ENCODE measurements at regions of chr11 and their contacts with region 1.

Region 1: GRCh38 chr11:65859200-65859811 is 927 bp upstream of the MUS81 start:
- DNase-seq: peak; percentile 100
- ATAC-seq: peak; percentile 72
- H3K4me3 Mint-ChIP-seq: peak overlapping the region; percentile 89
- H3K27ac Mint-ChIP-seq: peak overlapping the region; percentile 97
- H3K4me1 Mint-ChIP-seq: peaks cover 58% of the 10 kb centered on the region
- H3K27me3 Mint-ChIP-seq: no peaks in the 10 kb centered on the region

Region 2: GRCh38 chr11:65711785-65712632 is 147.3 kb before region 1 on chr11 and contains the start of gene KAT5:
- CTCF ChIA-PET with region 1: interaction called, 18 read pairs
- POLR2A ChIA-PET with region 1: interaction called, 10 read pairs
- DNase-seq: peak; percentile 99
- ATAC-seq: peak; percentile 86
- H3K4me3 Mint-ChIP-seq: peak within 1 kb of the TSS; percentile 85
- H3K27ac Mint-ChIP-seq: peak within 1 kb of the TSS; percentile 99
- H3K4me1 Mint-ChIP-seq: peaks cover 30% of the 10 kb centered on the region
- H3K27me3 Mint-ChIP-seq: no peaks in the 10 kb centered on the region
- total RNA-seq, gene KAT5: 63.2 to 68.7 TPM

Region 3: GRCh38 chr11:65833297-65834030 is 25.8 kb before region 1 on chr11 and contains the start of gene SNX32:
- CTCF ChIA-PET with region 1: interaction called, 16 read pairs
- POLR2A ChIA-PET with region 1: interaction called, 6 read pairs
- DNase-seq: peak; percentile 97
- ATAC-seq: peak; percentile 100
- H3K4me3 Mint-ChIP-seq: no peak within 1 kb of the TSS
- H3K27ac Mint-ChIP-seq: peak within 1 kb of the TSS; percentile 53
- H3K4me1 Mint-ChIP-seq: peaks cover 9% of the 10 kb centered on the region
- H3K27me3 Mint-ChIP-seq: peaks cover 24% of the 10 kb centered on the region
- total RNA-seq, gene SNX32: 0.44 to 1.6 TPM

Region 4: DNA sequence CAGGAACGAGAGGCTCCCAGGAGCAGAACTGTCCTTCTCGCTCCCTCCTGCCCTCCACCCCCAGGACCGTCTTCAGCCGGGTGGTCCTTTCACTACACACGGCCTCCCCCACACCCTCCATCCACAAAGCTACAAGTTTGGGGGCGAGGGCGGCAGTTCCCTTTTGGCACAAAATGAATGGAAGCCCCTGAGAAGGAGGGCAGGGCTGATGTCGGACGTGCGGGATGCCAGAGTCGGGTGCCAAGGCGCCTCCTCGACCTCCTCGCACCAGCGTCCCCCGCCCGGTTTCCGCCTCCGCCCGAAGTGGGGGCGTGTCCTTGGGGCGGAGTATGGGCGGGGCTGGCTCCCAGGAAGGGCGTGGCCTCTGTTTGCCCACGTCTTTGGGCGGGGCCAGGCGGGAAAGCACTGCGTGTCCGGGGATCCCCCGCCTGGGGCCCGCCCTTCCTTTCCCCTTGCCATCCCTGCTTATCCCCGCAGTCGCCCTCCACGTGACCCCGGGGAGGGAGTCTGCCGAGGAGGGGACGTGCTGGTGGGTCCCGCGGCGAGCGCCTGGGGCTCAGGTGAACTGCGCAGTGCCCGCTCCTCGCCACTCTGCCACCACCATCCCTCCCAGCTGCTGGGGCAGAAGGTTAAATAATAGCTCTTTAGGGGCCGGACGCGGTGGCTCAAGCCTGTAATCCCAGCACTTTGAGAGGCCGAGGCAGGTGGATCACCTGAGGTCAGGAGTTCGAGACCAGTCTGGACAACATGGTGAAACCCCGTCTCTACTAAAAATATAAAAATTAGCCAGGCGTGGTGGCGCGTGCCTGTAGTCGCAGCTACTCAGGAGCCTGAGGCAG is 14.2 kb after region 1 on chr11:
- CTCF ChIA-PET with region 1: interaction called, 584 read pairs
- POLR2A ChIA-PET with region 1: interaction called, 305 read pairs
- DNase-seq: peak; percentile 96
- ATAC-seq: peak; percentile 88
- H3K4me3 Mint-ChIP-seq: peak overlapping the region; percentile 83
- H3K27ac Mint-ChIP-seq: peak overlapping the region; percentile 83
- H3K4me1 Mint-ChIP-seq: peaks cover 67% of the 10 kb centered on the region
- H3K27me3 Mint-ChIP-seq: peaks cover 5% of the 10 kb centered on the region

Region 5: DNA sequence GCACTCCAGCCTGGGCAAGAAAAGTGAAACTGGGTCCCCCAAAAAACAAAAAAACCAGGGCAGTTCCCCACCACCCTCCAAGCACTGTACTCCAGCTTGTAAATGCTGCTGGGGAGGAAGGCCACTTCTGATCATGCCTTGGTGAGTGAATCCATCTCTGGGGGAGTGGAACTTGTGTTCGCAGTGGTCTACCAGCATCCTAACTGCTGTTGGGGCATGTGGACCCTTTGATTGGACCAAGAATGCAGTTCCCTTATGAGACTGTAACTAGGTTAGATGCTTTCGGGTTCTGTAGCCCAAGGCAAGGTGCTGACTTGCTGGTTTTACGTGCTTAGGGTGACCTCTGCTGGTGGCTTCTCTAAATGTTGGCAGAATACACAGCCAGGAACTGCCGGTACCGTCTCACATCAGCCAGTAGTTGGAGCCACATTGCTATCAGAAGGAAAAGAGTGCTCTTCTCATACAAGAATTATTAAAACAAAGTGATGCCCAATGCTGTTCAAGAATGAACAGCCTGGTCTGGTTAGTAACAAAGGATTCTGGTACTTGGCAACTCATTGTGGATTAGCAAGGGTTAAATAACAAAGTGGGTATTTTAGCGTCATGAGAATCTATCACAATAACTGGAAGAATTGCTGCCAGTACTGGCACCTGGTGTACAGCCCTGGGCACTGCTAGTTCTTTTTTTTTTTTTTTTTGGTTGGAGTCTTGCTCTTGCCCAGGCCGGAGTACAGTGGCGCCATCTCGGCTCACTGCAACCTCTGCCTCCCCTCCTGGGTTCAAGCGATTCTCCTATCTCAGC is 129.7 kb after region 1 on chr11:
- CTCF ChIA-PET with region 1: interaction called, 13 read pairs
- POLR2A ChIA-PET with region 1: no interaction called
- DNase-seq: peak; percentile 97
- ATAC-seq: peak; percentile 100
- H3K4me3 Mint-ChIP-seq: no peak overlapping the region
- H3K27ac Mint-ChIP-seq: peak overlapping the region; percentile 75
- H3K4me1 Mint-ChIP-seq: peaks cover 9% of the 10 kb centered on the region
- H3K27me3 Mint-ChIP-seq: no peaks in the 10 kb centered on the region

Measured in activated CD8-positive, alpha-beta T cell treated with anti-CD3 and anti-CD28 coated beads, Interleukin-2, amount 10 ng/mL, durations not matched to agents 7 days and 5 days (primary cell).